GM18951 (cell line): ENCODE measurements at regions of chr1 and their contacts with region 1.

Region 1: DNA sequence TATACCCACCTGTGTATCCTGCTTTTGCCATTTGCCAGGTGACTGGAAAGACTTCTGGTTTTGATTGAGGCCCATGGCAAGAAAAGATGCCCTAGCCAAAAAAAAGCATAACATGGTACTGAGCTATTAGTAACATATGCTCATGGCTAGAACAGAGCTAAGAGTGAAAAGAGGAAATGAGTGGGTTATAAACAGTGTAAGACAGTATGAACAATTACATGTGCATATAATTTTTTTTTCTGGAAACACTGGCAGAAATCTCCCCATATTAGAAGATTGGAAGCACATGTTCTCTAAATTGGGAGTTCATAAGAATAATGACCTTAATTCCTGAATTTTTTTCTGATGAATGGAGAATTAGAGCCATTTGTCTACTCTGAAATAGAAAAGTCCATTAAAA is 41.2 kb upstream of the PDC start:
- POLR2A ChIP-seq: no peak

Region 2: GRCh38 chr1:186595969-186596368 is 93.9 kb after region 1 on chr1:
- in situ Hi-C with region 1: loop called (anchors 10 kb)
- POLR2A ChIP-seq: no peak

Region 3: DNA sequence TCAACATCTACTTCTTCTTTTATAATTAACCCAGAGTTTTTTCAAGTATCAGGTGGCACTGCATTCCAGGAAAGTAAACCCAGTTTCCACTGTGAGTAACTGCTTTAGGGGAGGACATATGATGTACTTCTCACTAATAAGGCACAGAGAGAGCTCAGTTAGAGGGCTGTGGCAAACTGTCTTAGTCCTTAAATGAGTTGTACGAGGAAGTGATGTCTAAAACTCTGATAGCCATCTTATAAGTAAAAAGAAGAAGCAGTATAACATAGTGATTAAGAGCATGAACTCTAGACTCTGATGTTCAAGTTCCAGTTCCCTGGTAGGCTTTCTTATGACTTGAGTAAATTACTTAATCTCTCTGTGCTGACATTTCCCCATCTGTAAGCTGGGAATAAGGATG is 236.8 kb after region 1 on chr1:
- in situ Hi-C with region 1: no loop called
- POLR2A ChIP-seq: no peak